Activated naive CD4-positive, alpha-beta T cell treated with anti-CD3 and anti-CD28 coated beads for 36 hours (primary cell): ENCODE measurements at regions of chr2 and their contacts with region 1.

Region 1: GRCh38 chr2:25822190-25823117 is 55.8 kb downstream of the ASXL2 start:
- DNase-seq: peak; percentile 83
- H3K4me3 Mint-ChIP-seq: peak overlapping the region; percentile 71
- H3K27ac Mint-ChIP-seq: peak overlapping the region; percentile 52
- H3K4me1 Mint-ChIP-seq: peaks cover 63% of the 10 kb centered on the region
- H3K27me3 Mint-ChIP-seq: no peaks in the 10 kb centered on the region

Region 2: DNA sequence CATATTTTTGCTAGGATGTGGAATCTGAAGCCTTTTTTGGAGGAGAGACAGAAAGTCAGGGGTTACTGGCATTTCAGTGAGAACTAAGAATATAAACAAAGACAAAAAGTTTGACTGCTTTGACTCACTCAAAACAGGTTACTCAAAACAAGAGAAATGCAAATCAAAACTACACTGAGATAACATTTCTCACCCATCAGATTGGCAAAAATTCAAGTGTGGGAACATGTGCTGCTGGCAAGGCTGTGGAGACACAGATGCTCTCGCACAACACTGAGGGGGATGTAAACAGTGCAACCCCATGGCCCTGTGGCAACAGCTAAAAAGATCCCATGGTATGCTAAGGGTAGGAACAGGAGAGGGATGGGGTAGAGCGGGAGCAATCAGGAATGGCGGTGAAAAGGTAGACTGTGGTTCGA is 235.7 kb before region 1 on chr2:
- CTCF ChIA-PET with region 1: no interaction called
- intact Hi-C with region 1: loop called (anchors 2 kb)
- DNase-seq: peak; percentile 60
- H3K4me3 Mint-ChIP-seq: no peak overlapping the region
- H3K27ac Mint-ChIP-seq: peak overlapping the region; percentile 54
- H3K4me1 Mint-ChIP-seq: peaks cover 17% of the 10 kb centered on the region
- H3K27me3 Mint-ChIP-seq: no peaks in the 10 kb centered on the region

Region 3: DNA sequence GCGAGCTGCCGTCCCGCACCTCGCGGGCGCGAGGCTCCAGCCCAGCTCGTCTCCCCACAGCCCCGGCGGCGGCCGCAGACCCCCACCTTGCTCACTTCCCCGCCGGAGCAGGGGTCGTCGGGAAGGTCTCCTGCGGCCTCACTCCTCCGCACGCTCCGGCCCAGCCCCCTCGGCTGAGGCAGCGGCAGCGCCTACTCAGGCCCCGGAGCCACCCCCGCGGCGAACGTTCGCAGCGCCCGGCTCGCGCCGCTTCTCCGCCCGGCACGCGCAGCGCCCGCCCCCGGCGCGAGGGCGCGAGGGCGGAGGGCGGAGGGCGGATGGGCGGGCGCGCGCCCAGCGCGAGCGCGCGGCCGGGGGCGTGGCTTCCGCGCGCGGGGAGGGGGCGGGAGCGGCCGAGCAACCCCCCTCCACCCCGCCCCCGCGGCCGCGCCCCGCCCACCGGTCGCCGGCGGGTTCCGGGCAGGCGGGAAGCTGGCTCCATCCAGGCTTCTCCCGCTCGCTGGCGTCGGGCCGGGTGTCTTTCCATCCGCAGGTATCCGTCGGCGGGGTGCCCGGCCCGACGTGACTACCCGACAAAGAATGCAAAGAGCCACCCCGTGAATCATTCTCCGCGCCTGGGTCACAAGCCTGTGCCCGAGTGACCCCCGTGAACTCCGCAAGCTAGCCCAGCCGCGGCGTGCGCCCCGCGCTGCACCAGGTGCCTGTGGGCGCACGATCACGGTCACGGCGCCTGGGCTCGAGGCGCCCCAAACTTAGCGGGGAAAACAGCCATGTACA is 149.0 kb before region 1 on chr2 and contains the start of gene DTNB:
- CTCF ChIA-PET with region 1: no interaction called
- intact Hi-C with region 1: loop called (anchors 2 kb)
- DNase-seq: peak; percentile 82
- H3K4me3 Mint-ChIP-seq: peak within 1 kb of the TSS; percentile 79
- H3K27ac Mint-ChIP-seq: peak within 1 kb of the TSS; percentile 60
- H3K4me1 Mint-ChIP-seq: peaks cover 25% of the 10 kb centered on the region
- H3K27me3 Mint-ChIP-seq: no peaks in the 10 kb centered on the region
- total RNA-seq, gene DTNB: 27.2 to 27.6 TPM

Region 4: GRCh38 chr2:25749676-25750075 is 72.8 kb before region 1 on chr2:
- CTCF ChIA-PET with region 1: no interaction called
- intact Hi-C with region 1: loop called (anchors 5 kb)
- DNase-seq: no peak
- H3K4me3 Mint-ChIP-seq: no peak overlapping the region
- H3K27ac Mint-ChIP-seq: no peak overlapping the region
- H3K4me1 Mint-ChIP-seq: peaks cover 12% of the 10 kb centered on the region
- H3K27me3 Mint-ChIP-seq: no peaks in the 10 kb centered on the region

Region 5: GRCh38 chr2:25794544-25795276 is 27.7 kb before region 1 on chr2:
- CTCF ChIA-PET with region 1: interaction called, 4 read pairs
- intact Hi-C with region 1: loop called (anchors 1 kb)
- DNase-seq: no peak
- H3K4me3 Mint-ChIP-seq: peak overlapping the region; percentile 49
- H3K27ac Mint-ChIP-seq: peak overlapping the region; percentile 86
- H3K4me1 Mint-ChIP-seq: peaks cover 85% of the 10 kb centered on the region
- H3K27me3 Mint-ChIP-seq: no peaks in the 10 kb centered on the region

Region 6: DNA sequence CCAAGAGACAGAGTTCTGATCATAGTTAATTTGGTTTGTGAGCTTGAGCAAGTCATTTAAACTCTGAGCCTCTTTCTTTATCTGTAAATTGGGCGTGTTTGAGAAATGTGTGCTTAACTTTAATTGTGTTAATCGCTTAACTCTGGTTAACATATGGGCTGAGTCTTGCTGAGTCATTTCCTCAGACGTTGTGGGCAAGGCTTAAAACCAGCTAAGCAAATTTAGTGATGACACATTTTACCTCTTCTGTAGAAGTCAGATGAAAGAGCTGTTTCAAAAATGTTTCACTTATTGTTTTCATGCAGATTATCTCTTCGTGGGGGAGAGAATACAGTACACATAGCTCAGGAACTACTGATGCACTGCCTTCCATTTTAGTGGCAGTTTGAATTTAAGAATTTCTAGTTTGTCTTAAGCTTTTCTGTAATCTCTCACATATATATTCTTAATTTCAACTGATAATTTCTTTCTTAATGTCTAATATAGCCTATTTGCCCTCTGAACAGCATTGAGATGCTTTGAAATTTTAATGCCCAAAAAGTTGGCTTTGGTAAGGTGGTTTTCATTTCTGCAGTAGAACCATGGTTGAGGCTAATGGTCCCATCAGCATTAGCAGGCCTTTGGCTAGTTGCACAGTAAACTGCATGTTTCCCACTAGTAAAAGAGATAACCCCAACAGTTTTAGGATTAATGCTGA is 246.3 kb after region 1 on chr2:
- CTCF ChIA-PET with region 1: no interaction called
- intact Hi-C with region 1: loop called (anchors 1 kb)
- DNase-seq: peak; percentile 76
- H3K4me3 Mint-ChIP-seq: no peak overlapping the region
- H3K27ac Mint-ChIP-seq: peak overlapping the region; percentile 20
- H3K4me1 Mint-ChIP-seq: peaks cover 47% of the 10 kb centered on the region
- H3K27me3 Mint-ChIP-seq: no peaks in the 10 kb centered on the region

Region 7: DNA sequence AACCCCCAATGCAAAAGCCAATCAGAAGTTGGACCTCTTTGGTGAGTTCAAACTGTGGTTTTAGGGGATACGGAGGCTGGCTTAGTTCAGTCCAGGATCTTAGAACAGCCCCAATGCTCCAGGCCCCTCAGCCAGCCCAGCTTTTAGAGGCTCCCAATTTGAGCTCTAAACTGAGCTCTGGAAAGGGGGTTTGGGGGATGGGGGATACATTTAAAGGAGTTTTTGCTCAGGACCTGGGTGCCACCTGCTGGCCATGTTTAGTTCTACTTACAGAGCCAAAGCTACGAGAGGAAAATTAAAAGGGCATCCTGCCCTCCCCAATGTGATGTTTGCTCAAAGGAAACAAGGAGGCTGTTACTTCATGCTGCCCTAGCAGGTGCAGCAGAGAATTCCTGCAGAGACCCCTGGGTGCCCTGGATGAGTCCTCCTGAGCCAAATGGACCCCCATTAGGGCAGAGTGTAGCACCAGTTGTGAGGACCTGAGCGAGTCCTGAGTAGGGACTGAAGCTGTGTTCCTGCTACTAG is 1194.4 kb after region 1 on chr2:
- CTCF ChIA-PET with region 1: no interaction called
- intact Hi-C with region 1: no loop called
- DNase-seq: peak; percentile 70
- H3K4me3 Mint-ChIP-seq: no peak overlapping the region
- H3K27ac Mint-ChIP-seq: no peak overlapping the region
- H3K4me1 Mint-ChIP-seq: no peaks in the 10 kb centered on the region
- H3K27me3 Mint-ChIP-seq: no peaks in the 10 kb centered on the region